ENCODE measurements at regions of chr6 and their contacts with region 1.

Region 1: DNA sequence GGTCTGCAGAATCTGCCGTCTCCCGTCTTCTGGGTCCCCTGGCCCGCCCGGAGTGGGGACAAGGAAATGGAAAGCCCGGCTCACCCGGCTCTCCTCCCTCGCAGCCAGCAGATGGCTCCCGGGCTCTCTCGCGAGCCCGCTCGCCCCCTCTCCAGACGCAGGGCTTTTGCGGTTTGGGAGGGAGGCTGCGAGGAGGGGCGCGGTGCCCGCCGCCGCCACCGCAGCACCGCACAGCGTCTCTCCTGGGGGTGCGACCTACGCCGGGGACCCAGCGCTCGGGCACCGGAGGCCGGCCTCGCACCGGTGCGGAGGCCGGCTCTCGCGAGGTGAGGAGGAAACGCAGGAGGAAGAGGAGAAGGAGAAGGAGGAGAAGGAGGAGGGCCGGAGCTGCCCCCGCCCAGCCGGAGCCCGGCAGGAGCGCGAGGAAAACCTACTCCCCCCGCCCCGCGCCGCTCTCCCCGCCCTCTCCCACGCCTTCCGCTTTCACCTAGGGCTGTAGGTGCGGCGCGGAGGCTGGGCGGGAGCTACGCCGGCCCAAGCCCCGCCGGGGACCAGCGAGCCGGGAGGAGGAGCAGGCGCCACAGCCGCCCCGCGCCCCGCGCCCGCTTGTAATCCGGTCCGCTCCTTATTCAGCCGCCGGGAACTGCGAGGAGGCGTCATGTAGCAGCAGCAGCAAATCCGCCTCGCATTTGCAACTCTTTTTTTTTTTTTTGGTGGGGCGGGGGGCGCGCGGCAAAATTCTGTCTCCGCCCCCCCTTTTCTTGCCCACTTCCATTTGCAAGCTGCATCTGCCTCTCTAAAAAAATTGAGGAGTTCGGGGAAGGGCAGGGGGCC is at the start of gene CARMIL1:
- DNase-seq: peak; percentile 99
- H3K4me3 Mint-ChIP-seq: peak within 1 kb of the TSS; percentile 76
- H3K27ac Mint-ChIP-seq: peak within 1 kb of the TSS; percentile 90
- H3K4me1 Mint-ChIP-seq: peaks cover 61% of the 10 kb centered on the region
- H3K27me3 Mint-ChIP-seq: no peaks in the 10 kb centered on the region
- CTCF ChIP-seq: peak; percentile 97
- total RNA-seq, gene CARMIL1: 88.4 and 92.4 TPM in 2 replicates

Region 2: GRCh38 chr6:25173951-25174474 is 105.1 kb before region 1 on chr6:
- CTCF ChIA-PET with region 1: interaction called, 10 read pairs
- intact Hi-C with region 1: no loop called
- DNase-seq: peak; percentile 83
- H3K4me3 Mint-ChIP-seq: no peak overlapping the region
- H3K27ac Mint-ChIP-seq: peak overlapping the region; percentile 73
- H3K4me1 Mint-ChIP-seq: peaks cover 57% of the 10 kb centered on the region
- H3K27me3 Mint-ChIP-seq: no peaks in the 10 kb centered on the region
- CTCF ChIP-seq: no peak

Region 3: DNA sequence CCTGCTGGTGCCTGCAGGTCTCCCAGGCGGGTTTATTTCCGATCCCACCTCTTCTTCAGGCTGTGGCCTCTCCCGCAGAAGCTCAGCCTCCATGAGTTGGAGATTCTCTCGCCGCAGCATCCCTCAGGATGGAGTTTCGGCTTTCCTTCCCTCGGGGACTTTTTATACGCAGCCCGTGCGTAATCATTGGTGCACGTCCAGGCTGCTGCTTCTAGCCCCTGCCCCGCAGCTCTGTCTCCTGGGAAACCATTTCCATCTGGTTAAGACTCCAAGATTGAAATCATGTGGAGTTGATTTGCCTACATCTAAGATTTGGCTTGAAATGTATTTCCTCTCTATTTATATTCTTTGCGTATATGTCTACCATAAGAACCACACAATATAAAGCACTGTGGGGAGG is 46.7 kb before region 1 on chr6:
- CTCF ChIA-PET with region 1: no interaction called
- intact Hi-C with region 1: no loop called
- DNase-seq: no peak
- H3K4me3 Mint-ChIP-seq: no peak overlapping the region
- H3K27ac Mint-ChIP-seq: no peak overlapping the region
- H3K4me1 Mint-ChIP-seq: peaks cover 33% of the 10 kb centered on the region
- H3K27me3 Mint-ChIP-seq: no peaks in the 10 kb centered on the region
- CTCF ChIP-seq: no peak

Region 4: GRCh38 chr6:25263657-25264056 is 15.5 kb before region 1 on chr6:
- CTCF ChIA-PET with region 1: interaction called, 101 read pairs
- intact Hi-C with region 1: loop called (anchors 1 kb)
- DNase-seq: no peak
- H3K4me3 Mint-ChIP-seq: no peak overlapping the region
- H3K27ac Mint-ChIP-seq: no peak overlapping the region
- H3K4me1 Mint-ChIP-seq: peaks cover 10% of the 10 kb centered on the region
- H3K27me3 Mint-ChIP-seq: no peaks in the 10 kb centered on the region
- CTCF ChIP-seq: no peak

Region 5: DNA sequence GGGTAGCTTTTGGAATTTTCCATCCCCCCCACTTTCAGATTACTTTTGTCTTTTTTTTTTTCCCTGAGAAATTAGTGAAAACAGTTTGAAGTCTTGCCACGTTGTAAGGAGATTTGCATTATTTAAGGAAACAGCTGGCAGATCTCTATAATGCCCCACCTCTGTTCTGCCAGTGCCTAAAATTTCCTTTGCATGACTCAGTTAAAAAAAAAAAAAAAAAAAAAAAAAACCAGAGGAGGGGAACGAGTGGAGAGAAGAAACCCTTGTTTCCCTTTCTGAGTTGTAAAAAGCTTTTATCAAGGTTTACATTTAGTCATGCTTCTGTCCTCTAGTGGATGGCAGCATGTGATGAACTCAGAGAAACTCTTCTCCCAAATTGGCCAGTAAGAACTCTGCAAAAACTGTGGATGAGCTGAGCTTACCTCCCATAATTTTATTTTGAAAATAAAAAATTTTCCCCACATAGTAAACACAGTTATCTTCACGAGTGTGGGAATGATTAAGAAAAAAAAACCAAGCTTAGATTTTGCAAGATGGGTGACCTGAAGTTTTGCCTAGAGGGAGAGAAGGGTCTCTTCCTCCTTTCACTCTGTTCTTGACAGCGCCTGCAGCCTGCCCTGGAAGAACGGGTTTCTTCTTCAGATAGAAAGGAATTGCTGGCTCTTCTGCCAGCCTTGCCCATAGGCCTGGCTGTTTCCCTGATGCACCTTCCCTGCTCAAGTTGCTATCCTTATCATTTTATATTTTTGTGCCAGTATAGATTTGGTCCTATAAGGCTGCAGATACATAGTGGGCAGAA is 33.8 kb after region 1 on chr6:
- CTCF ChIA-PET with region 1: interaction called, 87 read pairs
- intact Hi-C with region 1: loop called (anchors 1 kb)
- DNase-seq: peak; percentile 51
- H3K4me3 Mint-ChIP-seq: peak overlapping the region; percentile 54
- H3K27ac Mint-ChIP-seq: peak overlapping the region; percentile 85
- H3K4me1 Mint-ChIP-seq: peaks cover 84% of the 10 kb centered on the region
- H3K27me3 Mint-ChIP-seq: no peaks in the 10 kb centered on the region
- CTCF ChIP-seq: no peak

Region 6: GRCh38 chr6:25395731-25396130 is 116.6 kb after region 1 on chr6:
- CTCF ChIA-PET with region 1: interaction called, 10 read pairs
- intact Hi-C with region 1: no loop called
- DNase-seq: no peak
- H3K4me3 Mint-ChIP-seq: no peak overlapping the region
- H3K27ac Mint-ChIP-seq: no peak overlapping the region
- H3K4me1 Mint-ChIP-seq: peaks cover 8% of the 10 kb centered on the region
- H3K27me3 Mint-ChIP-seq: no peaks in the 10 kb centered on the region
- CTCF ChIP-seq: no peak

Region 7: DNA sequence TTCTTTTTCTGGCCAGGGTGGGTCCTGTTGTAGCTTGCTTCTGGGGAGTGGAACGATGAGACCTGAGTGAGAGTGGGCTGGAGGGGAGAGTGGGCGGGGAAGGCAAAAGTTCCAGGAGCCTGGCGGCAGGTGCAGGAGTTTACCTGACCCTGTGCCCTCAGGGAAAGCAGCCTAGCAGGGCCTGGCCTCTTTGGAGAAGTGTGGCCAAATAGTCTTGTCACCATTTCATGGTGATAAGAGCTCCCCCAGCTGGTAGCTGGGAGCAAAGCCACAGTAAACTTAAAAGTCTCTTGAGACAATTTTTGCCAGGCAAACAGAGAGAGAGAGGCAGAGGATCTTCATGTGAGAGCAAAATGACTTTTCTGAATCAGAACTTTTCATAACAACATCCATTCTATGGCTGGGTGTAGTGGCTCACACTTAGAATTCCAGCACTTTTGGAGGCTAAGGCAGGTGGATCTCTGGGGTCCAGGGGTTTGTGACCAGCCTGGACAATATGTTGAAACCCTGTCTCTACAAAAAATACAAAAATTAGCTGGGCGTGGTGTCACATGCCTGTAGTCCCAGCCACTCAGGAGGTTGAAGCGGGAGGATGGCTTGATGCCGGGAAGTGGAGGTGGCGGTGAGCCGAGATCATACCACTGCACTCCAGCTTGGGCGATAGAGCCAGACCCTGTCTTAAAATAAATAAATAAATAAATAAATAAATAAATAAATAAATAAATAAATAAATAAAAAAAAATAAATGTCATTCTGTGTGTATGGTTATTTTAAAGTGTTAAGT is 211.1 kb after region 1 on chr6:
- CTCF ChIA-PET with region 1: interaction called, 107 read pairs
- intact Hi-C with region 1: loop called (anchors 1 kb)
- DNase-seq: peak; percentile 86
- H3K4me3 Mint-ChIP-seq: no peak overlapping the region
- H3K27ac Mint-ChIP-seq: peak overlapping the region; percentile 2
- H3K4me1 Mint-ChIP-seq: peaks cover 13% of the 10 kb centered on the region
- H3K27me3 Mint-ChIP-seq: no peaks in the 10 kb centered on the region
- CTCF ChIP-seq: peak; percentile 81

Measured in Calu3 (cell line).